HCT116 (cell line): ENCODE measurements at regions of chr9 and their contacts with region 1.

Region 1: GRCh38 chr9:72022841-72023240 is 37.6 kb downstream of the C9orf57 start:
- DNase-seq: no peak
- ATAC-seq: no peak
- H3K4me3 ChIP-seq: no peak overlapping the region
- H3K27ac ChIP-seq: no peak overlapping the region
- H3K4me1 ChIP-seq: peaks cover 0 to 3% of the 10 kb centered on the region in 2 experiments; a peak in 1 of 4 replicates
- H3K27me3 ChIP-seq: no peaks in the 10 kb centered on the region
- CTCF ChIP-seq: no peak
- POLR2A ChIP-seq: no peak
- RAD21 ChIP-seq: no peak

Region 2: DNA sequence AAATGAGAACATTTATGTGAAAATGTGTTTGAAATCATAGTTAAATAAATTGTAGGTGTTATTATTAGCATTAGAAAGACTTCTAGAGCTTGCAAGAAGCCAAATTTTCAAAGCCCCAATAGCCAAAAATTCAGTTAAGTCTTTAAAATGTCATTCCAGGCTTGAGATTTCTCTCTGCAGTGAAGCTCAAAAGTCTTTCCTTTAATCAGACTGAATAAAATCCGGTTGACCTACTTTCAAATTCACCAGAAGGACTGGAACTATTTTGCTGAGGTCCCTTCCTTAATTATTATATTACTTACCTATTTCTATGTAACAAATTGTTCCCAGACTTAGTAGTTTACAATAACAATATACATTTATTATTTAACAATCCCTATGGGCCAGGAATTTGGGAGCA is 789.2 kb before region 1 on chr9:
- CTCF ChIA-PET with region 1: no interaction called
- POLR2A ChIA-PET with region 1: no interaction called
- RAD21 ChIA-PET with region 1: no interaction called
- intact Hi-C with region 1: no loop called
- DNase-seq: no peak
- ATAC-seq: no peak
- H3K4me3 ChIP-seq: no peak overlapping the region
- H3K27ac ChIP-seq: no peak overlapping the region
- H3K4me1 ChIP-seq: no peaks in the 10 kb centered on the region
- H3K27me3 ChIP-seq: peaks cover 5% of the 10 kb centered on the region
- CTCF ChIP-seq: no peak
- POLR2A ChIP-seq: no peak
- RAD21 ChIP-seq: no peak

Region 3: GRCh38 chr9:71285191-71285656 is 737.6 kb before region 1 on chr9:
- CTCF ChIA-PET with region 1: interaction called, 17 read pairs
- POLR2A ChIA-PET with region 1: no interaction called
- RAD21 ChIA-PET with region 1: no interaction called
- intact Hi-C with region 1: loop called (anchors 5 kb)
- DNase-seq: peak; percentile 43
- ATAC-seq: peak; percentile 90
- H3K4me3 ChIP-seq: no peak overlapping the region
- H3K27ac ChIP-seq: no peak overlapping the region
- H3K4me1 ChIP-seq: no peaks in the 10 kb centered on the region
- H3K27me3 ChIP-seq: peaks cover 18% of the 10 kb centered on the region
- CTCF ChIP-seq: peak; percentile 56 to 88 (median 81); a peak in 5 of 6 replicates
- POLR2A ChIP-seq: no peak
- RAD21 ChIP-seq: peak; percentile 79

Region 4: GRCh38 chr9:71806901-71807307 is 215.9 kb before region 1 on chr9:
- CTCF ChIA-PET with region 1: interaction called, 45 read pairs
- POLR2A ChIA-PET with region 1: no interaction called
- RAD21 ChIA-PET with region 1: interaction called, 5 to 7 read pairs
- intact Hi-C with region 1: loop called (anchors 1 kb)
- DNase-seq: peak; percentile 73
- ATAC-seq: peak; percentile 99
- H3K4me3 ChIP-seq: no peak overlapping the region
- H3K27ac ChIP-seq: no peak overlapping the region
- H3K4me1 ChIP-seq: no peaks in the 10 kb centered on the region
- H3K27me3 ChIP-seq: no peaks in the 10 kb centered on the region
- CTCF ChIP-seq: peak; percentile 89 to 99 (median 93)
- POLR2A ChIP-seq: no peak
- RAD21 ChIP-seq: peak; percentile 96

Region 5: GRCh38 chr9:71984403-71984802 is 38.4 kb before region 1 on chr9:
- CTCF ChIA-PET with region 1: interaction called, 19 read pairs
- POLR2A ChIA-PET with region 1: no interaction called
- RAD21 ChIA-PET with region 1: interaction called, 3 to 4 read pairs
- intact Hi-C with region 1: no loop called
- DNase-seq: no peak
- ATAC-seq: peak; percentile 57; the same call in 1 of the 2 replicates
- H3K4me3 ChIP-seq: no peak overlapping the region
- H3K27ac ChIP-seq: no peak overlapping the region
- H3K4me1 ChIP-seq: peaks cover 0 to 6% of the 10 kb centered on the region in 2 experiments; a peak in 2 of 4 replicates
- H3K27me3 ChIP-seq: no peaks in the 10 kb centered on the region
- CTCF ChIP-seq: no peak
- POLR2A ChIP-seq: no peak
- RAD21 ChIP-seq: no peak

Region 6: GRCh38 chr9:72407114-72407513 is 384.3 kb after region 1 on chr9:
- CTCF ChIA-PET with region 1: no interaction called
- POLR2A ChIA-PET with region 1: no interaction called
- RAD21 ChIA-PET with region 1: no interaction called
- intact Hi-C with region 1: no loop called
- DNase-seq: no peak
- ATAC-seq: no peak
- H3K4me3 ChIP-seq: no peak overlapping the region
- H3K27ac ChIP-seq: no peak overlapping the region
- H3K4me1 ChIP-seq: no peaks in the 10 kb centered on the region
- H3K27me3 ChIP-seq: no peaks in the 10 kb centered on the region
- CTCF ChIP-seq: no peak
- POLR2A ChIP-seq: no peak
- RAD21 ChIP-seq: no peak